ENCODE measurements at regions of chr19 and their contacts with region 1.

Region 1: GRCh38 chr19:44988896-44989556 is 12.2 kb upstream of the RELB start:
- DNase-seq: peak; percentile 57
- ATAC-seq: peak; percentile 97
- H3K4me3 Mint-ChIP-seq: no peak overlapping the region
- H3K27ac Mint-ChIP-seq: no peak overlapping the region
- H3K4me1 Mint-ChIP-seq: no peaks in the 10 kb centered on the region
- H3K27me3 Mint-ChIP-seq: no peaks in the 10 kb centered on the region
- CTCF ChIP-seq: no peak

Region 2: GRCh38 chr19:44757735-44758505 is 231.1 kb before region 1 on chr19:
- CTCF ChIA-PET with region 1: no interaction called
- POLR2A ChIA-PET with region 1: no interaction called
- intact Hi-C with region 1: no loop called
- DNase-seq: no peak
- ATAC-seq: no peak
- H3K4me3 Mint-ChIP-seq: no peak overlapping the region
- H3K27ac Mint-ChIP-seq: no peak overlapping the region
- H3K4me1 Mint-ChIP-seq: peaks cover 46% of the 10 kb centered on the region
- H3K27me3 Mint-ChIP-seq: no peaks in the 10 kb centered on the region
- CTCF ChIP-seq: no peak

Region 3: GRCh38 chr19:44951179-44952159 is 37.6 kb before region 1 on chr19:
- CTCF ChIA-PET with region 1: no interaction called
- POLR2A ChIA-PET with region 1: no interaction called
- intact Hi-C with region 1: no loop called
- DNase-seq: no peak
- ATAC-seq: no peak
- H3K4me3 Mint-ChIP-seq: no peak overlapping the region
- H3K27ac Mint-ChIP-seq: no peak overlapping the region
- H3K4me1 Mint-ChIP-seq: peaks cover 24% of the 10 kb centered on the region
- H3K27me3 Mint-ChIP-seq: no peaks in the 10 kb centered on the region
- CTCF ChIP-seq: no peak

Region 4: GRCh38 chr19:45016388-45017319 is 27.6 kb after region 1 on chr19:
- CTCF ChIA-PET with region 1: interaction called, 3 read pairs
- POLR2A ChIA-PET with region 1: no interaction called
- intact Hi-C with region 1: loop called (anchors 1 kb)
- DNase-seq: peak; percentile 62
- ATAC-seq: peak; percentile 81
- H3K4me3 Mint-ChIP-seq: peak overlapping the region; percentile 64
- H3K27ac Mint-ChIP-seq: peak overlapping the region; percentile 89
- H3K4me1 Mint-ChIP-seq: peaks cover 22% of the 10 kb centered on the region
- H3K27me3 Mint-ChIP-seq: no peaks in the 10 kb centered on the region
- CTCF ChIP-seq: no peak

Region 5: GRCh38 chr19:45032421-45032820 is 43.4 kb after region 1 on chr19:
- CTCF ChIA-PET with region 1: no interaction called
- POLR2A ChIA-PET with region 1: no interaction called
- intact Hi-C with region 1: no loop called
- DNase-seq: no peak
- ATAC-seq: no peak
- H3K4me3 Mint-ChIP-seq: no peak overlapping the region
- H3K27ac Mint-ChIP-seq: no peak overlapping the region
- H3K4me1 Mint-ChIP-seq: no peaks in the 10 kb centered on the region
- H3K27me3 Mint-ChIP-seq: no peaks in the 10 kb centered on the region
- CTCF ChIP-seq: no peak

Region 6: GRCh38 chr19:45047188-45047797 is 58.3 kb after region 1 on chr19:
- CTCF ChIA-PET with region 1: interaction called, 11 read pairs
- POLR2A ChIA-PET with region 1: interaction called, 3 read pairs
- intact Hi-C with region 1: loop called (anchors 1 kb)
- DNase-seq: no peak
- ATAC-seq: peak; percentile 73
- H3K4me3 Mint-ChIP-seq: peak overlapping the region; percentile 83
- H3K27ac Mint-ChIP-seq: peak overlapping the region; percentile 91
- H3K4me1 Mint-ChIP-seq: peaks cover 78% of the 10 kb centered on the region
- H3K27me3 Mint-ChIP-seq: no peaks in the 10 kb centered on the region
- CTCF ChIP-seq: no peak

Region 7: DNA sequence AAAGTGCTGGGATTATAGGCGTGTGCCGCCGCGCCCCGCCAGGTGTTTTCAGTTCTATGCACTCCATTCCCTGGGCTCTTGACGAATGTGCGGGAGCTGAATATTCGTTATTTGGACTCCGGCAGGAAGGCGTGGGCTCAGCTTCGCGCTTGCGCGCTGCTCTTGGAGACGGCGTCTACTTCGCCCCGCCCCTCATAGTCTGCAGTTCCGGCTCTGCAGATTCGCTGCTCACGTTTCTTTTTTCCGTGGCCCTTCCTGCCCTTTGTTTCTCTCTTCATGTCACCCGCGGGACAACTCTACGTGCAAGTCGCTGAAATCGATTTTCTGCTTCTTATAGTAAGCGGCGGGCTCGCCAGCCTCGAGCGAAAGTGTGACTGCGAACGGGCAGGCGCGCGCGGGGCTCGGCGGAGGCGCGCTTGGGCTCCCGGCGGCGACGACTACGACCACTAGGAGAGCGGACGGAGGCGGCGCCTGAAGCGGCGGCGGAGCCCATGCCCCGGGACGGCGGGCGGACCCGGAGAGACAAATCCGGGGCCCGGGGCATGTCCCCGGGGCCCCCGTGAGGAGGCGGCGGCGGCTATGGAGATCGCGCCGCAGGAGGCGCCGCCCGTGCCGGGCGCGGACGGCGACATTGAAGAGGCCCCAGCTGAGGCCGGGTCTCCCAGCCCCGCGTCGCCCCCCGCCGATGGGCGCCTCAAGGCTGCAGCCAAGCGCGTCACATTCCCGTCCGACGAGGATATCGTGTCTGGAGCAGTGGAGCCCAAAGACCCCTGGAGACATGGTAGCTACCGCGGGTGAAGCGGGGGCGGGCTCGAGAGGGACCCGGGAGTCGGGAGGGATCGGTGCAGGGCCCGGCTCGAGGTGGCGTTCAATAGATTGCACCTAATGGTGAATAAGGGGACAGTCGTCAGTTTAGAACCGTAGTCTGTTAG is 104.0 kb after region 1 on chr19 and contains the start of gene PPP1R37:
- CTCF ChIA-PET with region 1: no interaction called
- POLR2A ChIA-PET with region 1: no interaction called
- intact Hi-C with region 1: no loop called
- DNase-seq: peak; percentile 81
- ATAC-seq: peak; percentile 69
- H3K4me3 Mint-ChIP-seq: peak within 1 kb of the TSS; percentile 93
- H3K27ac Mint-ChIP-seq: peak within 1 kb of the TSS; percentile 99
- H3K4me1 Mint-ChIP-seq: peaks cover 54% of the 10 kb centered on the region
- H3K27me3 Mint-ChIP-seq: no peaks in the 10 kb centered on the region
- CTCF ChIP-seq: no peak
- total RNA-seq, gene PPP1R37: 18.8 and 27.2 TPM in 2 replicates

Region 8: GRCh38 chr19:45125926-45126493 is 137.0 kb after region 1 on chr19:
- CTCF ChIA-PET with region 1: no interaction called
- POLR2A ChIA-PET with region 1: no interaction called
- intact Hi-C with region 1: loop called (anchors 1 kb)
- DNase-seq: peak; percentile 52
- ATAC-seq: peak; percentile 83
- H3K4me3 Mint-ChIP-seq: no peak overlapping the region
- H3K27ac Mint-ChIP-seq: no peak overlapping the region
- H3K4me1 Mint-ChIP-seq: peaks cover 37% of the 10 kb centered on the region
- H3K27me3 Mint-ChIP-seq: no peaks in the 10 kb centered on the region
- CTCF ChIP-seq: no peak

Measured in activated B cell treated with CpG ODN at 0.5 μM for 24 hours (primary cell).